ENCODE measurements at regions of chr14 and their contacts with region 1.

Region 1: DNA sequence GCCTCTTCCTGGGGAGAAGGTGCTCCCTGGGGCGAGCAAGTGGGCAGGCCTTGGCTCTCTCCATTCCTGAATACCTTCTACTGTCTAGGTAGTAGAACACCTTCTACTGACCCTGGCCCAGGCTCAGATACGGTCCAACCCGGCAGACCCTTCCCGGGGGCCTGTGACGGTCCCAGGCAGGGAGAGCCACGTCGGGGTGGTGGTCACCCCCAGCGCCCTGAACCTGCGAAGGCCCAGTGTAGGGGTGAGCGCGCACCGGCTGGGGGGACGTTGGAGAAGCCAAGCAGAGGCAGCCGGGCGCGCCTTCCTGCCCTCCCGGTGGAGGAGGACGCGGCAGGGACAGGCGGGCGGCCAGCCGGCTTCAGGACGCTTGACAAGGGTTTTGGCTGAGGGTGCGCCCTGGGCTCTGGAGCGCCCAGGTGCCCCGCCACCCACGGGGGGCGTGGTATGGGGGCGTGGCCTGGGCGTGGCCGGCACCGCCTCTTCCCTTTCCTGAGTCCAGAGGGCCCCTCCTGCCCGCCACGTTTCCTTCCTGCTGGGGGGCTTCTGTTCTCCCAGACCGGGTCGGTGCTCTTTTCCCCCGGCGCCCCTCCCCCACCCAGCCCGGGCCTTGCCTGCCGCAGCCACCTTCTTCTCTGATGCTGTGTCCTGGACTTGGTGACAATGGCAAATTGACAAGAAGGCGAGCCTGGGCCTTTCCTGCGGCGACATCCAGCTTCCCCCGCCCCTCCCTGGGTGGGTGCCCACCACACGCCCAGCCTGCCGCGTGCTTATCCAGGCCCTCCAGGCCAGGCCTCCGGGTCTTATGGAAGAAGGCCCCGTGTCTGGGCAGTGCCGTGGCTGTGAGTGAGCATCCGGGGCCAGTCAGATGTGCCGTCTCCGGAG is 24.5 kb upstream of the PPP1R13B start:
- DNase-seq: peak; percentile 82
- ATAC-seq: peak; percentile 97
- H3K4me3 ChIP-seq: peak overlapping the region; percentile 22 to 71 (median 64)
- H3K4me3 Mint-ChIP-seq: peak overlapping the region; percentile 89
- H3K27ac ChIP-seq: peak overlapping the region in 1 of 2 donors; percentile 46
- H3K27ac Mint-ChIP-seq: peak overlapping the region; percentile 81
- H3K4me1 ChIP-seq: peaks cover 11 to 13% of the 10 kb centered on the region in 2 donors
- H3K4me1 Mint-ChIP-seq: peaks cover 7% of the 10 kb centered on the region
- H3K27me3 ChIP-seq: peaks cover 0 to 2% (median 0%) of the 10 kb centered on the region in 4 experiments
- H3K27me3 Mint-ChIP-seq: no peaks in the 10 kb centered on the region
- CTCF ChIP-seq: no peak

Region 2: GRCh38 chr14:102164241-102164641 is 1707.6 kb before region 1 on chr14:
- CTCF ChIA-PET with region 1: no interaction called
- POLR2A ChIA-PET with region 1: no interaction called
- intact Hi-C with region 1: no loop called
- DNase-seq: peak; percentile 8
- ATAC-seq: no peak
- H3K4me3 ChIP-seq: no peak overlapping the region
- H3K4me3 Mint-ChIP-seq: no peak overlapping the region
- H3K27ac ChIP-seq: no peak overlapping the region
- H3K27ac Mint-ChIP-seq: no peak overlapping the region
- H3K4me1 ChIP-seq: peaks cover 6 to 7% of the 10 kb centered on the region in 2 donors
- H3K4me1 Mint-ChIP-seq: peaks cover 47% of the 10 kb centered on the region
- H3K27me3 ChIP-seq: no peaks in the 10 kb centered on the region
- H3K27me3 Mint-ChIP-seq: no peaks in the 10 kb centered on the region
- CTCF ChIP-seq: no peak

Region 3: GRCh38 chr14:103404032-103404918 is 467.6 kb before region 1 on chr14:
- CTCF ChIA-PET with region 1: no interaction called
- POLR2A ChIA-PET with region 1: no interaction called
- intact Hi-C with region 1: no loop called
- DNase-seq: no peak
- ATAC-seq: no peak
- H3K4me3 ChIP-seq: peak overlapping the region in 1 of 5 experiments; percentile 12
- H3K4me3 Mint-ChIP-seq: no peak overlapping the region
- H3K27ac ChIP-seq: peak overlapping the region in 1 of 2 donors; percentile 49
- H3K27ac Mint-ChIP-seq: no peak overlapping the region
- H3K4me1 ChIP-seq: peaks cover 20 to 25% of the 10 kb centered on the region in 2 donors
- H3K4me1 Mint-ChIP-seq: peaks cover 47% of the 10 kb centered on the region
- H3K27me3 ChIP-seq: no peaks in the 10 kb centered on the region
- H3K27me3 Mint-ChIP-seq: no peaks in the 10 kb centered on the region
- CTCF ChIP-seq: no peak

Region 4: GRCh38 chr14:103847451-103848188 is 24.2 kb before region 1 on chr14 and contains the start of gene PPP1R13B:
- CTCF ChIA-PET with region 1: no interaction called
- POLR2A ChIA-PET with region 1: interaction called, 3 read pairs
- intact Hi-C with region 1: loop called (anchors 1 kb)
- DNase-seq: peak; percentile 95
- ATAC-seq: peak; percentile 97
- H3K4me3 ChIP-seq: peak within 1 kb of the TSS; percentile 44 to 73 (median 60)
- H3K4me3 Mint-ChIP-seq: peak within 1 kb of the TSS; percentile 91
- H3K27ac ChIP-seq: peak within 1 kb of the TSS in 1 of 2 donors; percentile 59
- H3K27ac Mint-ChIP-seq: peak within 1 kb of the TSS; percentile 83
- H3K4me1 ChIP-seq: peaks cover 10 to 14% of the 10 kb centered on the region in 2 donors
- H3K4me1 Mint-ChIP-seq: peaks cover 16% of the 10 kb centered on the region
- H3K27me3 ChIP-seq: no peaks in the 10 kb centered on the region
- H3K27me3 Mint-ChIP-seq: no peaks in the 10 kb centered on the region
- CTCF ChIP-seq: no peak
- total RNA-seq, gene PPP1R13B: 27.7 and 38.6 TPM in 2 replicates

Region 5: GRCh38 chr14:103897075-103897947 is 25.5 kb after region 1 on chr14:
- CTCF ChIA-PET with region 1: no interaction called
- POLR2A ChIA-PET with region 1: no interaction called
- intact Hi-C with region 1: no loop called
- DNase-seq: no peak
- ATAC-seq: no peak
- H3K4me3 ChIP-seq: no peak overlapping the region
- H3K4me3 Mint-ChIP-seq: no peak overlapping the region
- H3K27ac ChIP-seq: no peak overlapping the region
- H3K27ac Mint-ChIP-seq: no peak overlapping the region
- H3K4me1 ChIP-seq: peaks cover 0 to 3% of the 10 kb centered on the region in 2 donors
- H3K4me1 Mint-ChIP-seq: peaks cover 3% of the 10 kb centered on the region
- H3K27me3 ChIP-seq: no peaks in the 10 kb centered on the region
- H3K27me3 Mint-ChIP-seq: peaks cover 6% of the 10 kb centered on the region
- CTCF ChIP-seq: no peak

Region 6: GRCh38 chr14:103910262-103910935 is 38.6 kb after region 1 on chr14:
- CTCF ChIA-PET with region 1: no interaction called
- POLR2A ChIA-PET with region 1: no interaction called
- intact Hi-C with region 1: no loop called
- DNase-seq: peak; percentile 72
- ATAC-seq: peak; percentile 73
- H3K4me3 ChIP-seq: peak overlapping the region in 1 of 5 experiments; percentile 15
- H3K4me3 Mint-ChIP-seq: peak overlapping the region; percentile 51
- H3K27ac ChIP-seq: no peak overlapping the region
- H3K27ac Mint-ChIP-seq: no peak overlapping the region
- H3K4me1 ChIP-seq: peaks cover 4 to 10% of the 10 kb centered on the region in 2 donors
- H3K4me1 Mint-ChIP-seq: peaks cover 8% of the 10 kb centered on the region
- H3K27me3 ChIP-seq: no peaks in the 10 kb centered on the region
- H3K27me3 Mint-ChIP-seq: no peaks in the 10 kb centered on the region
- CTCF ChIP-seq: peak; percentile 78

Measured in B cell (primary cell).